Gastrocnemius medialis (tissue), 4 donors: ENCODE measurements at regions of chr15 and their contacts with region 1.

Region 1: GRCh38 chr15:52440400-52440799 is 88.3 kb downstream of the MYO5A start:
- DNase-seq: peak; percentile 40 to 60
- ATAC-seq: peak; percentile 84 to 89
- H3K4me3 ChIP-seq: no peak overlapping the region
- H3K27ac ChIP-seq: peak overlapping the region; percentile 65 to 91 (median 68)
- H3K4me1 ChIP-seq: peaks cover 36 to 69% of the 10 kb centered on the region in 2 donors
- H3K27me3 ChIP-seq: no peaks in the 10 kb centered on the region
- CTCF ChIP-seq: no peak
- POLR2A ChIP-seq: no peak

Region 2: GRCh38 chr15:52503788-52504496 is 63.5 kb after region 1 on chr15:
- in situ Hi-C with region 1: no loop called
- intact Hi-C with region 1: loop called (anchors 10 kb)
- DNase-seq: no peak
- ATAC-seq: no peak
- H3K4me3 ChIP-seq: no peak overlapping the region
- H3K27ac ChIP-seq: no peak overlapping the region
- H3K4me1 ChIP-seq: peaks cover 14 to 21% of the 10 kb centered on the region in 2 donors
- H3K27me3 ChIP-seq: no peaks in the 10 kb centered on the region
- CTCF ChIP-seq: no peak
- POLR2A ChIP-seq: no peak